ENCODE measurements at regions of chr20 and their contacts with region 1.

Region 1: DNA sequence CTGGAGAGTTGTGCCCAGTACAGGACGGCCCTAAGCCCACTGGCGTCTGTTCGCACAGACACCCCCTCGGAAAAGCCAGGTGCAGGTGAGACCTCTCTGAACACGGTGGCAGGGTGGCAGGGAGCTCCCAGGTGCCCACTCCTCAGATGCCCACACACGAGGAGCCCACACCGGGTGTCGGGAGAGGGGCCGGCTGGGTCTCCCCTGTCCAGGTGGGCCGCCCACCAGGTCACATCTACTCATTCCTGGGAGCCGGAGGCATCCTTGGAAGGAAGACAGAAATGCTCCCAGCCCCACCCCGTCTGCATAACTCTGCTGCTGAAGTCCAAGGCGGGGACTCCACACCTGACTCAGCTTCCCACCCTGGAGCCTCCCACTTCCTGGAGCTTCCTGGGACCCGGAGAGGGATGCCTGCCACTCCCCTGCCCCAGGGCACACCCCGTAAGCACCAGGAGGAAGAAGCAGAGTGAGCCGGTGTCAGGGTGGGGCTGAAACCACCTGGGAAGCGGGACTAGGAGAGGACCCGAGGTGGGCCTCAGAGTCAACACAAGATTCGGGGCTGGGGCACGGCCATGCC is 2.5 kb downstream of the SRMS start:
- DNase-seq: no peak
- H3K4me3 ChIP-seq: no peak overlapping the region
- H3K27ac ChIP-seq: no peak overlapping the region
- H3K4me1 ChIP-seq: peaks cover 0 to 5% (median 0%) of the 10 kb centered on the region in 4 donors
- H3K27me3 ChIP-seq: peaks cover 0 to 80% of the 10 kb centered on the region in 2 donors
- CTCF ChIP-seq: no peak

Region 2: DNA sequence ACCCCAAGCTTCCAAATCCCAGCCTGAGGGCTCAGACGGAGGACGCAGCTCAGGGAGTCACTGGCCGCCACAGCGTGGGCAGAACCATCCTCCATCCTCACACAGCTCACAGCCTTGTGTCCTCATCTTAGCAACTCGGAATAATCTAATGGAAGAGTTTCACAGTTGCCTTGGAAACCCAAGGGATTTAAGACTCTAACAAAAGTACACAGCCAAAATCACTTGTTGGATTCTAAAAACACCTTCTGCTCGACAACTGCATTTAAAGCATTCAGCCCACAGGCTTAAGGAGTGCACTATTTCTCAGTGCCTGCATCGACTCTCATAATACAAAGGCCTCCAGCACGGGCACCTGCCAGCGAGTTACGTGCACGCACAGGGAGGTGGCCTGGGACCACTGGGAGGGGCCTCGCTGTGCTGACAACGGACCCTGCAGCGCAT is 240.7 kb after region 1 on chr20:
- intact Hi-C with region 1: loop called (anchors 5 kb)
- DNase-seq: no peak
- H3K4me3 ChIP-seq: no peak overlapping the region
- H3K27ac ChIP-seq: no peak overlapping the region
- H3K4me1 ChIP-seq: no peaks in the 10 kb centered on the region
- H3K27me3 ChIP-seq: no peaks in the 10 kb centered on the region
- CTCF ChIP-seq: no peak

Measured in tibial artery (tissue), 4 donors.